CD14-positive monocyte (primary cell): ENCODE measurements at regions of chr9 and their contacts with region 1.

Region 1: GRCh38 chr9:105007143-105007542 is 79.2 kb upstream of the ABCA1 start:
- DNase-seq: peak; percentile 92 to 97 (median 97)
- H3K4me3 ChIP-seq: peak overlapping the region in 1 of 3 experiments; percentile 43
- H3K4me3 Mint-ChIP-seq: peak overlapping the region; percentile 54 to 79
- H3K27ac ChIP-seq: peak overlapping the region; percentile 70 to 75
- H3K27ac Mint-ChIP-seq: peak overlapping the region; percentile 92 to 97 (median 95)
- H3K4me1 ChIP-seq: peaks cover 49 to 58% of the 10 kb centered on the region in 2 donors
- H3K4me1 Mint-ChIP-seq: peaks cover 47% of the 10 kb centered on the region
- H3K27me3 ChIP-seq: no peaks in the 10 kb centered on the region
- H3K27me3 Mint-ChIP-seq: peaks cover 0 to 6% (median 3%) of the 10 kb centered on the region in 3 donors
- CTCF ChIP-seq: no peak

Region 2: GRCh38 chr9:104795082-104795481 is 212.1 kb before region 1 on chr9:
- intact Hi-C with region 1: no loop called
- DNase-seq: peak; percentile 16 to 44 (median 40)
- H3K4me3 ChIP-seq: peak overlapping the region in 1 of 3 experiments; percentile 47
- H3K4me3 Mint-ChIP-seq: peak overlapping the region in 1 of 2 donors; percentile 53
- H3K27ac ChIP-seq: peak overlapping the region in 1 of 2 donors; percentile 74
- H3K27ac Mint-ChIP-seq: peak overlapping the region in 6 of 7 donors; percentile 43 to 81 (median 75)
- H3K4me1 ChIP-seq: peaks cover 14 to 23% of the 10 kb centered on the region in 2 donors
- H3K4me1 Mint-ChIP-seq: peaks cover 32% of the 10 kb centered on the region
- H3K27me3 ChIP-seq: no peaks in the 10 kb centered on the region
- H3K27me3 Mint-ChIP-seq: peaks cover 0 to 1% (median 0%) of the 10 kb centered on the region in 3 donors
- CTCF ChIP-seq: no peak

Region 3: GRCh38 chr9:104872656-104873485 is 134.3 kb before region 1 on chr9:
- intact Hi-C with region 1: loop called in 1 of 2 experiments (anchors 5 kb)
- DNase-seq: peak; percentile 95 to 99 (median 99)
- H3K4me3 ChIP-seq: no peak overlapping the region
- H3K4me3 Mint-ChIP-seq: peak overlapping the region in 1 of 2 donors; percentile 60
- H3K27ac ChIP-seq: peak overlapping the region; percentile 83 to 96
- H3K27ac Mint-ChIP-seq: peak overlapping the region; percentile 90 to 98 (median 96)
- H3K4me1 ChIP-seq: peaks cover 59% of the 10 kb centered on the region in 2 donors
- H3K4me1 Mint-ChIP-seq: peaks cover 65% of the 10 kb centered on the region
- H3K27me3 ChIP-seq: no peaks in the 10 kb centered on the region
- H3K27me3 Mint-ChIP-seq: peaks cover 0 to 2% (median 2%) of the 10 kb centered on the region in 3 donors
- CTCF ChIP-seq: no peak

Region 4: DNA sequence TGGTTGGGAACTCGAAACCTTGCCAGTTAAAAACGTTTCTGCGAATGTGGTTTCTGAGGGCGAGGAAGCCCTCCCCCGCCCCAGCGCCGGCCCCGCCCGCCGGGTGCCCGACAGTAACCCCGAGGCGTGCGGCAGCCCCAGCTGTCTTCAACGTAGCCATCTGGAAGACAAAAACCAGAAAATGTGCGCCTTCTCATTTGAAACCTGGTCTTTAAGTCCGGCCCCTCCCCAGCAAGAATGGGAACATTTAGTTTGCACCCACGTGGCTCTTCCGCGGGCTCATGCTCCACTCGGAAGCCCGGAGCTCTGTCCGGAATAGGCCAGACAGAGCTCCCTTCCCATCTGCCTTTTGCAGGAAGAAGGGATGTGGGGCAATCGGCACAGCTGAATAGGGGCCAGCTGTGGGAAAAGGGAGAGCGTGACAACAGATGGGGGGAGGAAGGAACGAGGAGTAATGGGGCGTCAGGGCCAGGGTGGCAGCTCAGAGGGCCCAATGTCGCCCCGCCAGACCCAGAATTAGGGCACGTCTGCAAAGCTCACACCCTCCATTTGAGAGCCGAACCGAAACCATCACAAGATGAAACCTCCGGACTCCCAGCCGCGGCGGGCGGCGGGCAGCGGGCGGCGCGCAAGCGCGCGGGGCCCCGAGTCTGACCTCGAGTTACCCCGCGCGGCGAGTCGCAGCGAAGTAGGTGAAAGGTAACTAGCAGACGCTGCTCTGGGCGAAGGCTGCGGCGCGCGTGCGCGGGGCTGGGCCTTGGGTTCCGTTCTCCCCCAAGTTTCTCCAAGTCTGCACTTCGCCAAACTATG is 15.8 kb before region 1 on chr9:
- intact Hi-C with region 1: loop called (anchors 2 kb)
- DNase-seq: peak; percentile 86 to 91 (median 89)
- H3K4me3 ChIP-seq: peak overlapping the region; percentile 46 to 81 (median 57)
- H3K4me3 Mint-ChIP-seq: peak overlapping the region; percentile 93 to 96
- H3K27ac ChIP-seq: peak overlapping the region; percentile 97
- H3K27ac Mint-ChIP-seq: peak overlapping the region; percentile 97 to 99 (median 98)
- H3K4me1 ChIP-seq: peaks cover 43 to 51% of the 10 kb centered on the region in 2 donors
- H3K4me1 Mint-ChIP-seq: peaks cover 46% of the 10 kb centered on the region
- H3K27me3 ChIP-seq: no peaks in the 10 kb centered on the region
- H3K27me3 Mint-ChIP-seq: peaks cover 0 to 9% (median 3%) of the 10 kb centered on the region in 3 donors
- CTCF ChIP-seq: no peak